Activated T-helper 1 cell treated with anti-CD3 and anti-CD28 coated beads, Interleukin-12 subunit alpha, Interleukin-12 subunit beta, Interleukin-2, Interleukin-4 antibody, amounts not matched to agents 30 ng/mL and 10 ng/mL and 1 ng/mL, durations not matched to agents 14 hours and 24 hours and 36 hours (primary cell): ENCODE measurements at regions of chr2 and their contacts with region 1.

Region 1: DNA sequence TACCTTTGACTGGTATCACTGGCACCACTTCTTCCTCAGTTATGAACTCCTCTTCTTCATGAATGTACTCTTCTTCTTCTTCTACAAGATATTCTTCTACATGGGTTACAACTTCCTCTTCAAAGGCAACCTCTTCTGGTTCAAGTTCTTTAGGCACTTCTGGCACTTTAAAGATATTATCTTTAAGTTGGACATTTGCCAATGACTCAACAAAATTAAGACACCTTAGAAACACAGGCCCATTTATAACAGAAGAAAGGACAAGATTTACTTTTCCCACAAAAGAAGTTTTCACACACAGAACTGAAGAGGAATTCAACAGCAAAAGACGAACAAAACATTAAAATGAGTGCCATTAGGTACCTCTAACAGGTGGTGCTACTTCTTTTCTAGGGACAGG is 127.3 kb downstream of the TTN start:
- DNase-seq: no peak
- H3K4me3 Mint-ChIP-seq: no peak overlapping the region
- H3K27ac Mint-ChIP-seq: no peak overlapping the region
- H3K4me1 Mint-ChIP-seq: no peaks in the 10 kb centered on the region
- H3K27me3 Mint-ChIP-seq: peaks cover 1% of the 10 kb centered on the region

Region 2: GRCh38 chr2:178632729-178633128 is 47.2 kb before region 1 on chr2:
- intact Hi-C with region 1: loop called (anchors 5 kb)
- DNase-seq: no peak
- H3K4me3 Mint-ChIP-seq: no peak overlapping the region
- H3K27ac Mint-ChIP-seq: no peak overlapping the region
- H3K4me1 Mint-ChIP-seq: no peaks in the 10 kb centered on the region
- H3K27me3 Mint-ChIP-seq: no peaks in the 10 kb centered on the region

Region 3: GRCh38 chr2:178908810-178909209 is 228.9 kb after region 1 on chr2:
- intact Hi-C with region 1: no loop called
- DNase-seq: no peak
- H3K4me3 Mint-ChIP-seq: no peak overlapping the region
- H3K27ac Mint-ChIP-seq: no peak overlapping the region
- H3K4me1 Mint-ChIP-seq: no peaks in the 10 kb centered on the region
- H3K27me3 Mint-ChIP-seq: no peaks in the 10 kb centered on the region